A549 (cell line): ENCODE measurements at regions of chr9 and their contacts with region 1.

Region 1: GRCh38 chr9:34072868-34073590 is 24.3 kb upstream of the UBAP2 start:
- DNase-seq: peak; percentile 87
- ATAC-seq: peak; percentile 85 to 93
- H3K4me3 ChIP-seq: no peak overlapping the region
- H3K27ac ChIP-seq: peak overlapping the region; percentile 61 to 78
- H3K4me1 ChIP-seq: peaks cover 22% of the 10 kb centered on the region
- CTCF ChIP-seq: no peak
- EP300 ChIP-seq: no peak; a peak in 1 of 5 replicates
- POLR2A ChIP-seq: no peak
- RAD21 ChIP-seq: no peak; a peak in 1 of 5 replicates

Region 2: GRCh38 chr9:33964086-33964768 is 108.8 kb before region 1 on chr9:
- CTCF ChIA-PET with region 1: no interaction called
- POLR2A ChIA-PET with region 1: no interaction called
- DNase-seq: no peak
- ATAC-seq: no peak; a peak in 1 of 6 replicates
- H3K4me3 ChIP-seq: no peak overlapping the region
- H3K27ac ChIP-seq: no peak overlapping the region
- H3K4me1 ChIP-seq: no peaks in the 10 kb centered on the region
- CTCF ChIP-seq: no peak
- EP300 ChIP-seq: no peak
- POLR2A ChIP-seq: no peak
- RAD21 ChIP-seq: no peak

Region 3: GRCh38 chr9:33988219-33988890 is 84.7 kb before region 1 on chr9:
- CTCF ChIA-PET with region 1: interaction called, 10 read pairs
- POLR2A ChIA-PET with region 1: no interaction called
- DNase-seq: no peak
- ATAC-seq: no peak
- H3K4me3 ChIP-seq: no peak overlapping the region
- H3K27ac ChIP-seq: no peak overlapping the region
- H3K4me1 ChIP-seq: peaks cover 9% of the 10 kb centered on the region; the same call in 2 of the 3 replicates
- CTCF ChIP-seq: no peak
- EP300 ChIP-seq: no peak
- POLR2A ChIP-seq: no peak
- RAD21 ChIP-seq: no peak

Region 4: GRCh38 chr9:34032631-34033030 is 40.4 kb before region 1 on chr9:
- CTCF ChIA-PET with region 1: interaction called, 14 read pairs
- POLR2A ChIA-PET with region 1: no interaction called
- DNase-seq: no peak
- ATAC-seq: no peak
- H3K4me3 ChIP-seq: no peak overlapping the region
- H3K27ac ChIP-seq: no peak overlapping the region
- H3K4me1 ChIP-seq: peaks cover 29% of the 10 kb centered on the region
- CTCF ChIP-seq: no peak
- EP300 ChIP-seq: no peak
- POLR2A ChIP-seq: no peak
- RAD21 ChIP-seq: no peak

Region 5: GRCh38 chr9:34084562-34084961 is 11.5 kb after region 1 on chr9:
- CTCF ChIA-PET with region 1: interaction called, 31 read pairs
- POLR2A ChIA-PET with region 1: interaction called, 3 read pairs
- DNase-seq: no peak
- ATAC-seq: no peak; a peak in 1 of 6 replicates
- H3K4me3 ChIP-seq: no peak overlapping the region
- H3K27ac ChIP-seq: no peak overlapping the region
- H3K4me1 ChIP-seq: no peaks in the 10 kb centered on the region
- CTCF ChIP-seq: no peak
- EP300 ChIP-seq: no peak
- POLR2A ChIP-seq: no peak
- RAD21 ChIP-seq: no peak

Region 6: DNA sequence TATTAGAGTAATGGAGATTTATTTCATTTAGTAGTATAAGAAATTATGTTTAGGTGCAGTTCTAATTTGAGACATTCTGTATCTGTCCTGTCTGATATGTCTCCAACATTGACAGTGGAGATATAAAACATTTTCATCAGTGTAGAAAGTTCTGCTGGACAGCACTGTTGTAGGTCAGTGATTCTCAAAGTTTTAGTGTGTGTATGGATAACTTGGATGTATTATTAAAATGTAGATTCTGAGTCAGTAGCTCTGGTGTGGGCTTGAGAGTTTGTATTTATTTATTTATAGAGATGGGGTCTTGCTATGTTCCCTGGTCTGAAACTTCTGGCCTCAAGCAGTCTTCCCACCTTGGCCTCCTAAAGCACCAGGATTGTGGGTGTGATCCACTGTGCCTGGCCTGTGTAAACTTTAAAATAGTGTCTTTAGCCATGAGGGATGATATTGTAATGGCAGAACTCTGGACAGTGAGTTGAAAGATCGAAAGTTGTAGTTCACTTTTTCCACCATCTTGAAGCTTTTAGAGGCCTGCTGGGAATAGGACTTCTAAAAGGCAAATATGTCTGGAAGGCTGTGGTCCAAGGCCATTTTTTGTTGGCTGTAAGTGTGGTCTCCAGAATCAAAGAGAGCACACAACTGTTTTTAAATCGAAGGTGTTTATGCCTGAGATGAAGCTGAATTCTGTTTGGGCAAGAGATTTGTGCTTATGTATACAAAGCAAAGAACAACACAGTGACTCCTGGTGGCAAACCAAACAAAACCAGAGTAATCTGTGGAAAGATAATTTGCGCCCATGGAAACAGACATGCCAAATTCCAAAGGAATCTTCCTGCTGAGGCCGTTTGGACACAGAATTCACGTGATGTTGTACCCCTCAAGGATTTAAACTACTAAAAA is 118.2 kb after region 1 on chr9:
- CTCF ChIA-PET with region 1: interaction called, 11 read pairs
- POLR2A ChIA-PET with region 1: no interaction called
- DNase-seq: peak; percentile 30 to 71
- ATAC-seq: peak; percentile 56 to 72; a peak in 4 of 6 replicates
- H3K4me3 ChIP-seq: no peak overlapping the region
- H3K27ac ChIP-seq: peak overlapping the region; percentile 49 to 50; a peak in 5 of 6 replicates
- H3K4me1 ChIP-seq: peaks cover 44% of the 10 kb centered on the region
- CTCF ChIP-seq: peak; percentile 56
- EP300 ChIP-seq: no peak
- POLR2A ChIP-seq: no peak
- RAD21 ChIP-seq: peak; percentile 40 to 41; a peak in 4 of 5 replicates

Region 7: DNA sequence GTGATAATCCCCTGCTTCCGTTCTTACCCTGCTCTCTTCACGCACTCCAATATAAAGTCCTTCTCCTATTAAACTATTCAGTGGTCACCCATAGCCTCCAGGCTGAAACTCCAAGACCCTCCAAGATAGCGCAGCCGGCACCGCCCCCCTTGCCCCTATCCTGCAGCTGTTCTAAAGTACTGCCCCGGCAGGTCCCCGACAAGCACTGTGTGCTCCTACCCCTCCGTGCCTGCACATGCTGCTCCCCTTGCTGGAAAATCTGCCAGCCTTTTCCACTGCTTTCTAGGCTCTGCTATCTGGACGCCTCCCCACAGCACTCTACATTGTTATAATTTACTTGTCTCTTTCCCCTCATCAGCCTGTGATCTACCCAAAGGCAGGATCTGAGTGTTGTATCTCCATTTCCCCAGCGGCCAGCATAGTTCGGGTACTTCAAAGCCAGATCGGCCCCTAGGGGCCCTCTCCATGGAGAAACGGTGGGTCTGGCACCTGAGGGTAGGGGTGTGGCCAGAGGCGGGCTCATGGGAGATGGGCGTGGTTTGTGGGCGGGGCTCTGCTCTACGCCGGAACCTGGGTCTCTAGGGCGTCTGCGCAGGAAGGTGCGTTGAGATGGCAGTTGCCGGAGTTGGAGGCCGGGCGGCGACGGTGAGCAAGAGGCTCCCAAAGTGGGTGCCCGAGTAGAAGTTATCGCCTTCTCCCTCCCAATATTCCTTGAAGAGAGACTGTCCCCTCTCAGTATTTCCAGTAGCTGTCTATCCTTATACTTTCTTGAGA is 1333.3 kb after region 1 on chr9:
- CTCF ChIA-PET with region 1: no interaction called
- POLR2A ChIA-PET with region 1: no interaction called
- DNase-seq: no peak
- ATAC-seq: peak; percentile 27 to 33; a peak in 1 of 6 replicates
- H3K4me3 ChIP-seq: no peak overlapping the region
- H3K27ac ChIP-seq: no peak overlapping the region
- H3K4me1 ChIP-seq: no peaks in the 10 kb centered on the region
- CTCF ChIP-seq: no peak
- EP300 ChIP-seq: no peak
- POLR2A ChIP-seq: no peak
- RAD21 ChIP-seq: no peak